ENCODE measurements at regions of chr12 and their contacts with region 1.

Region 1: DNA sequence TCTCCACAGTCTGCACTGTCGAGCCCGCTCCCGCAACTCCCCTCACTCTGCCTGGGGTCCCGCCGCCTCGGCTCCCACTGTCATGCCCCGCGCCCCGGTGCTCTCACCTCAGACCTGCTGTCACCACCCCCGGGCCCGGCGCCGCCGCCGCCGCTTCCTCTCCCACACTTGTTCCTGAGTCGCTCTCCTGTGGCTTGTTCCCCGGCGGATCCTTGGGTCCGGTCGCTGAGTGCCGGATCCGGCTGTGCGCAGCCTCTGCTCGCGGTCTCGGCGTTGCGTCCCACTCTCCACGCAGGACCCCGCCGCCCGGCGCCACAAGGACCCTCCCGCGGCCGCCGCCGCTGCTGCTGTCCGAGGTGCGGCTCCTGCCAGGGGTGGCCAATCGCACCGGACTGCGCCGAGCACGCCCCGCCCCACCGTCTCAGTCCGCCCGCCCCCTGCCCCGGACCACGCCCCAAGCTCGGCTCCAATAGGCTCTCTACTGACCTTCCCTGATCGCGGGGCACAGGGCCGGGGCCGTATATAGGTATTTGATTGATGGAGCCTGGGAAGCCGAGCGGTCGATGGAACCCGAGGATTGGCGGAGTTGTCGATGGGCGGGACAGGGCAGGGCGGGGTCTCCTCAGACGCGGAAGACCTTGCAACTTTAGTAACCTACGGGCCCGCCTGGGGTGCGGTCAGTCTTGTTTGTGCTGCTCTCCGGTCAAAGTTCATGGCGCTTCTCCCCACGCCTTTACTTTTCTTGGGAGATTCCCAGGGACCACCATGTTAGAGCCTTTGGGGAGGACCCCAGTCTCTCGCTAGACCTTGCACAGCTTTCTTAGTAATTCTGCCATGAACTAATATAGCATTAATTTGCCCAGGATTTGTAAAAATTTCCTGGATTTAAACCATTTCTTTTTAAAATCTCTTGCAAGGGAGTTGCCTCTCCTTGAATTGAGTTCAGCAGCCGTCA is at the start of gene TAOK3:
- DNase-seq: peak; percentile 97
- ATAC-seq: peak; percentile 87
- H3K4me3 ChIP-seq: peak within 1 kb of the TSS; percentile 89 to 96 (median 90)
- H3K4me3 Mint-ChIP-seq: peak within 1 kb of the TSS; percentile 84
- H3K27ac ChIP-seq: peak within 1 kb of the TSS; percentile 77 to 79
- H3K27ac Mint-ChIP-seq: peak within 1 kb of the TSS; percentile 81
- H3K4me1 ChIP-seq: peaks cover 32 to 40% of the 10 kb centered on the region in 2 donors
- H3K4me1 Mint-ChIP-seq: peaks cover 48% of the 10 kb centered on the region
- H3K27me3 ChIP-seq: no peaks in the 10 kb centered on the region
- H3K27me3 Mint-ChIP-seq: no peaks in the 10 kb centered on the region
- CTCF ChIP-seq: no peak
- total RNA-seq, gene TAOK3: 69.6 and 80.4 TPM in 2 replicates

Region 2: GRCh38 chr12:118120579-118121363 is 252.0 kb before region 1 on chr12:
- CTCF ChIA-PET with region 1: interaction called, 46 read pairs
- POLR2A ChIA-PET with region 1: interaction called, 3 read pairs
- intact Hi-C with region 1: loop called (anchors 1 kb)
- DNase-seq: peak; percentile 61
- ATAC-seq: peak; percentile 75
- H3K4me3 ChIP-seq: no peak overlapping the region
- H3K4me3 Mint-ChIP-seq: no peak overlapping the region
- H3K27ac ChIP-seq: no peak overlapping the region
- H3K27ac Mint-ChIP-seq: peak overlapping the region; percentile 26
- H3K4me1 ChIP-seq: no peaks in the 10 kb centered on the region
- H3K4me1 Mint-ChIP-seq: peaks cover 4% of the 10 kb centered on the region
- H3K27me3 ChIP-seq: no peaks in the 10 kb centered on the region
- H3K27me3 Mint-ChIP-seq: no peaks in the 10 kb centered on the region
- CTCF ChIP-seq: peak; percentile 88

Region 3: GRCh38 chr12:118175823-118176447 is 196.9 kb before region 1 on chr12:
- CTCF ChIA-PET with region 1: interaction called, 221 read pairs
- POLR2A ChIA-PET with region 1: interaction called, 5 read pairs
- intact Hi-C with region 1: no loop called
- DNase-seq: peak; percentile 20
- ATAC-seq: peak; percentile 60
- H3K4me3 ChIP-seq: no peak overlapping the region
- H3K4me3 Mint-ChIP-seq: no peak overlapping the region
- H3K27ac ChIP-seq: peak overlapping the region in 1 of 2 donors; percentile 2
- H3K27ac Mint-ChIP-seq: peak overlapping the region; percentile 16
- H3K4me1 ChIP-seq: peaks cover 7 to 8% of the 10 kb centered on the region in 2 donors
- H3K4me1 Mint-ChIP-seq: peaks cover 12% of the 10 kb centered on the region
- H3K27me3 ChIP-seq: no peaks in the 10 kb centered on the region
- H3K27me3 Mint-ChIP-seq: no peaks in the 10 kb centered on the region
- CTCF ChIP-seq: no peak

Region 4: DNA sequence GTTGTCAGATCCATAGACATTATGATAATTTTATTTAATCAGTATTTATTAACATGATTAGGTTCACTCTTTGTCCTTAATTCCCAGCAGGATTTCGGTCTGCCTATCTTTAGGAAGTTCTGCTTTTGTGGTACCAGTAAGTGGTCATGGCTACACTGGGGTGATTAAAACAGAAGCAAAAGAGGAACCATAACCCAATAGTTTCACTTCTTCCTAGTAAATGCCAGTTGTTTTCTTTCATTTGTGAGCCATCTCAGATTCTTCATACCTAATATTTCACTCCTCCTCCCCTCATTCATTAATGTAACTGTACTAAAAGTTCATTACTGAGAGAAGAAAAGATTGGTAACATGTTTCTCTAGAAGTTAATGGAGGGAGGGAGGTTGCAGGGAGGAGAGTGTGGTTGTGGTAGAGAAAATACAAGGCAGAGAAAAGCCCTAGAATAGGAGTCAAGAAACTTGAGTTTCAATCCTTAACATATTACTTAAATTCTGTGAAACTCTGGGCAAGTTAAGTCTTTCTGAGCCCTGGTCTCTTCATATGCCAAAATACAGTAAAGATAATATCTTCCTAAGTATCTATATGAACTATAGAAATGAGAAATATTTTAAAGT is 135.7 kb before region 1 on chr12:
- CTCF ChIA-PET with region 1: interaction called, 28 read pairs
- POLR2A ChIA-PET with region 1: no interaction called
- intact Hi-C with region 1: loop called (anchors 1 kb)
- DNase-seq: peak; percentile 76
- ATAC-seq: peak; percentile 92
- H3K4me3 ChIP-seq: peak overlapping the region in 1 of 5 experiments; percentile 16
- H3K4me3 Mint-ChIP-seq: peak overlapping the region; percentile 75
- H3K27ac ChIP-seq: peak overlapping the region; percentile 21 to 67
- H3K27ac Mint-ChIP-seq: peak overlapping the region; percentile 90
- H3K4me1 ChIP-seq: peaks cover 36 to 37% of the 10 kb centered on the region in 2 donors
- H3K4me1 Mint-ChIP-seq: peaks cover 39% of the 10 kb centered on the region
- H3K27me3 ChIP-seq: no peaks in the 10 kb centered on the region
- H3K27me3 Mint-ChIP-seq: no peaks in the 10 kb centered on the region
- CTCF ChIP-seq: no peak

Region 5: DNA sequence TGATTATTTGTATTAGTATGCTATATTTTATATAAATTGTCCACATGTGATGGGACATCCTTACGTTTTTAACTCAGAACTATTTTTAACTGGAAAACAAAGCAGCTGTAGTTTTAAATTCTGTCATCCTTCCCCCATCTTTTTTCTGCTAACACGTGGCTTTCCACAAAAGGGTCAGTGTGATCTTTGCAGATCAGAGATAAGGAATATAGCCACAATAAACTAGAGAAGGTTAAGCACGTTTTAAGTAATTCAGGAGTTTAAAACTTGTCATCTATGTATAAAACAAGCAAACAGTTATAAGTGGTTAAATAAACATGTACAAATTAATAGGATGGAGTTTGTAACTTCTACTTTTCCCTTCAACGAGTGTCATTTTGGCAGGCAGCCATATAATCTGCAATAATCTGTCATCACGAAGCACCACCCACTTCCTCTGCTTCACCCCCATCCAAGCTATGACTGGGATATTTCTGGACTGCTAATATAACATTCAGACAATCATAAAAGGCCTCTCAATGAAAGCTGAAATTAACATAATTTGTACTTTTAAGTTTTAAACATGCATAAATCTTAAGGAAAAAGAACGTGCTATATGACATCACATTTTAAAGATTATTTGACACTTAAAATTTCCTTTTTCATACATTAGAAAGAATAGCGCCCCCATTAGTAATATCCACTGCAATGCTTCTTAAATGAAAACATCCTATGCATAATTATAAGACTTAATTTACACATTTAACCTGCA is 15.4 kb before region 1 on chr12:
- CTCF ChIA-PET with region 1: interaction called, 52 read pairs
- POLR2A ChIA-PET with region 1: interaction called, 6 read pairs
- intact Hi-C with region 1: loop called (anchors 1 kb)
- DNase-seq: peak; percentile 76
- ATAC-seq: peak; percentile 50
- H3K4me3 ChIP-seq: peak overlapping the region in 4 of 5 experiments; percentile 15 to 92 (median 48)
- H3K4me3 Mint-ChIP-seq: peak overlapping the region; percentile 93
- H3K27ac ChIP-seq: peak overlapping the region; percentile 43 to 87
- H3K27ac Mint-ChIP-seq: peak overlapping the region; percentile 69
- H3K4me1 ChIP-seq: peaks cover 23 to 38% of the 10 kb centered on the region in 2 donors
- H3K4me1 Mint-ChIP-seq: peaks cover 42% of the 10 kb centered on the region
- H3K27me3 ChIP-seq: no peaks in the 10 kb centered on the region
- H3K27me3 Mint-ChIP-seq: no peaks in the 10 kb centered on the region
- CTCF ChIP-seq: peak; percentile 33

Region 6: GRCh38 chr12:118467641-118468305 is 95.0 kb after region 1 on chr12:
- CTCF ChIA-PET with region 1: no interaction called
- POLR2A ChIA-PET with region 1: no interaction called
- intact Hi-C with region 1: no loop called
- DNase-seq: no peak
- ATAC-seq: no peak
- H3K4me3 ChIP-seq: no peak overlapping the region
- H3K4me3 Mint-ChIP-seq: no peak overlapping the region
- H3K27ac ChIP-seq: no peak overlapping the region
- H3K27ac Mint-ChIP-seq: no peak overlapping the region
- H3K4me1 ChIP-seq: no peaks in the 10 kb centered on the region
- H3K4me1 Mint-ChIP-seq: no peaks in the 10 kb centered on the region
- H3K27me3 ChIP-seq: no peaks in the 10 kb centered on the region
- H3K27me3 Mint-ChIP-seq: peaks cover 9% of the 10 kb centered on the region
- CTCF ChIP-seq: no peak

Measured in B cell (primary cell).